GM13976 (cell line): ENCODE measurements at regions of chr2 and their contacts with region 1.

Region 1: DNA sequence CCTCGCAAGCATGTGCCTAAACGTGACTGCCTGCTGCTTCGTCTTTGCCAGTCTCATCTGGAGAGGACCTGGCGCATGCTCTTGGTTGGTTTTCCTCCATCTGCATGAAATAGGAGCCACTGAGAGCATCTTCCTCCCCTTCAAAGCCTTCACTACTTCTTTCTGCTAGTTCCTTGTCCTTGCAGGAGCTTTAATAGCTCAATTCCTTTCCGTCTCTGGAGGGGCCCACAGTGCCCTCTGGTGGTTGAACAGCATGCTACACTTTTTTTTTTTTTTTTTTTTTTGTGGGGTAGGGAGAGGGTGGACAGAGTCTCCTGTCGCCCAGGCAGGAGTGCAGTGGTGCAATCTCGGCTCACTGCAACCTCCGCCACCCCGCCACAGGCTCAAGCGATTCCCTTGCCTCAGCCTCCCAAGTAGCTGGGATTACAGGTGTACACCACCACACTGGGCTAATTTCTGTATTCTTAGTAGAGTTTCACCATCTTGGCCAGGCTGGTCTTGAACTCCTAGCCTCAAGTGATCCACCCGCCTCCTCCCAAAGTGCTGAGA is 59.6 kb downstream of the SP110 start:
- DNase-seq: peak; percentile 76
- CTCF ChIP-seq: peak; percentile 43

Region 2: DNA sequence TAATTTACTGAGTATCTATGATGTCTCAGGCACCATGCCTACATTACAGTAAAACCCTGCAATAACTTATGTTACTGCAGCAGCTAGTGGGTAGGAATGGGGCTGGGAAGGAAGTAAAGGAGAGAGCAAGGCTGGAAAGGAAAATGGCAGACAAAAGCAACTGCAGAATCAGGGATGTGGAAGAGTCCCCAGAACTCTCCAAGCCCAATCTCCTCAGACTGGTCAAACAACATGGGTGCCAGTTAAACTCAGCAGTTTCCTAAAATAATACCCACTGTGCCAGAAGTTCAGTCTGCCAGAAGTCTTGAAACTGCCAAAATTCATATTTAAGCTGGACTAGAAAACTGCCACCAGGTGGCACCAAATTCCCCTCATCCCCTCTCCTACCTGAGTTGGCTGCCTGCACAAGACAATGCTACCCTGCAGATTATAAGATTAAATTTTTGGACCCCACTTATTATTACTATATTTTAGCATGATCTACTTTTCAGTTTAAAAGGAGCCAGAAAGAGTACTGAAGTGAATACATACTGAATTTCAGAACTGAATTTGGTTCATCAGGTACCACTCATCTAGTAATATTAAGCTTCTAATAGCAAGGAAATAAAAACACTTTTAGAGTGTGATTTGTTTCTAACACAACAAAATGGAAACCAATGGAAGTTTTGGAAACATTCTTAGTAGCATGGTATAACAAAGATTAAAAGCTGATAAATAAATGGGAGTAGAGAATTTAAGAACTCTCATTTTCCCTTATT is 359.0 kb before region 1 on chr2:
- in situ Hi-C with region 1: loop called (anchors 25 kb)
- DNase-seq: peak; percentile 63
- CTCF ChIP-seq: peak; percentile 67

Region 3: DNA sequence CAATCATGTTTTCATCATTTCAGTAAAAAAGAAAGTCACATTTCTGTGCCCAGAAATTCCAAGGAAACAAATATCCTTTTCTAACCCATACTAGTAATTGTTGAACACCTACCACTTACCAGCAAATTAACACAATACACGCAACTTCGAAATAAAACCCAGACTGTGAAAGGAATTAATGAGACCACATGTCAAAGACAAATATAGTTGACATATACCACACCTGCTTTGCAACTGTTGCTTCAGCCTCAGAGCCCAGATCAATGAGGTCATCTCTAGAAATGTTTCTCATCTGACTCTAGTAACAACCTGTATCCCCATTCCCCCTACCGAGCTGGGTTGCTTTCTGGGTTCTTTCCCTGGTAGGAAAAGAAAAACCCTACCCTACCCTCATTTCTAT is 291.0 kb before region 1 on chr2:
- in situ Hi-C with region 1: no loop called
- DNase-seq: peak; percentile 41
- CTCF ChIP-seq: no peak

Region 4: GRCh38 chr2:230319211-230319862 is 159.2 kb after region 1 on chr2:
- in situ Hi-C with region 1: no loop called
- DNase-seq: peak; percentile 54
- CTCF ChIP-seq: no peak